ENCODE measurements at regions of chr6 and their contacts with region 1.

Region 1: GRCh38 chr6:85678602-85679444 is 36.1 kb upstream of the SYNCRIP start:
- DNase-seq: peak; percentile 98
- H3K4me3 Mint-ChIP-seq: peak overlapping the region; percentile 89
- H3K27ac Mint-ChIP-seq: peak overlapping the region; percentile 92
- H3K4me1 Mint-ChIP-seq: peaks cover 52% of the 10 kb centered on the region
- H3K27me3 Mint-ChIP-seq: no peaks in the 10 kb centered on the region

Region 2: GRCh38 chr6:85600713-85601313 is 78.0 kb before region 1 on chr6:
- CTCF ChIA-PET with region 1: interaction called, 3 read pairs
- POLR2A ChIA-PET with region 1: interaction called, 141 read pairs
- DNase-seq: no peak
- H3K4me3 Mint-ChIP-seq: no peak overlapping the region
- H3K27ac Mint-ChIP-seq: no peak overlapping the region
- H3K4me1 Mint-ChIP-seq: no peaks in the 10 kb centered on the region
- H3K27me3 Mint-ChIP-seq: no peaks in the 10 kb centered on the region

Region 3: DNA sequence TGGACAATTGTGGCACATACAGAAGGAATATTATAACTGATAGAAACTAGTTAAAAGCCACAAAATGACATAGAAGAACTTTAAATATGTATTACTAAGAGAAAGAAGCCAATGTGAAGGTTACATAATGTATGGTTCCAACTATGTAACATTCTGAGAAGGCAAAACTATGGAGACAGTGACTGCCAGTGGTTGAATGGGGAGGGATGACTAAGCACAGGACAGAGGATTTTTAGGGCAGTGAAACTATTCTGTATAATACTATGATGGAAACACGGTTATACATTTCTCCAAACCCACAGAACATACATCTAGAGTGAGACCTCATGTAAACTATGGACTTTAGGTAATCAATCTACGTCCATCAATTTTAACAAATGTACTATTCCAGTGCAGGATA is 58.5 kb before region 1 on chr6:
- CTCF ChIA-PET with region 1: no interaction called
- POLR2A ChIA-PET with region 1: interaction called, 29 read pairs
- DNase-seq: no peak
- H3K4me3 Mint-ChIP-seq: no peak overlapping the region
- H3K27ac Mint-ChIP-seq: no peak overlapping the region
- H3K4me1 Mint-ChIP-seq: peaks cover 23% of the 10 kb centered on the region
- H3K27me3 Mint-ChIP-seq: no peaks in the 10 kb centered on the region

Region 4: DNA sequence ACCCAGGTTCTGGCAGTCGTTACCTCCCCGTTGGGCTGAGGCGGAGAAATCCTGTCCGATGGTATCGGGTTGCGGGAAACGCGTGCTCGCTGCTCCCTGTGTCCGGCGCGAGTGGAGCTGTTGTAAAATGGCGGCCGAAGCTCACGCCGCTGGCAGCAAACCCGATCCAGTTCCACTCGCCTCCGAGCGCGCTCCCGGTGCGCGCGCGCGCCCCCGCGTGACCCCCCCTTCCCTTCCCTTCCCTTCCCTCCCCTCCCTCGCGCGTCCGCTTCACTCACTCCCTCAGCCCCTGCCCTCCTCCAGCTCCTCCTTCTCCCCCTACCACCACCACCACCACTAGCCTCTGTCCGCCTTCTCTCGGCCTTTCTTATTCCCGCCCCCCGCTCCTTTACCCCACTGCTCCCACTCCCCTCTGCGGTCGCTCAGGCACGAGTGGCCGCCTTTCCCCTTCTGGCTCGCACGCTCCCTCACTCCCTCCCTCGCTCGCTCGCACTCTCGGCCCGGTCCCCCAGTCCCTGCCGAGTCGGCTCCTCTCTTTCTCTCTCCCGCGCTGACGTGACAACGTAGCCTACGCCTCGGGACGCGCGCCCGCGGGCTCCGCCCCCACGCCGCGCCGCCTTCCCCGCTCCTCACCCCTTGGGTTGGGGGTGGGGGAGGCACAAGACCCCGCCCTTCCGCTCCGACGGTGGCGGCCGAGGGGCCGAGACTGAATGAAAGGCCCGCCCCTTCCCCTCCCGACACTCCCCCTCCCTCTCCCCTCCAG is 35.9 kb before region 1 on chr6 and contains the start of gene SYNCRIP:
- CTCF ChIA-PET with region 1: interaction called, 116 read pairs
- POLR2A ChIA-PET with region 1: interaction called, 1,187 read pairs
- DNase-seq: peak; percentile 99
- H3K4me3 Mint-ChIP-seq: peak within 1 kb of the TSS; percentile 92
- H3K27ac Mint-ChIP-seq: peak within 1 kb of the TSS; percentile 99
- H3K4me1 Mint-ChIP-seq: peaks cover 48% of the 10 kb centered on the region
- H3K27me3 Mint-ChIP-seq: peaks cover 1% of the 10 kb centered on the region
- total RNA-seq, gene SYNCRIP: 100.0 to 101 TPM

Region 5: DNA sequence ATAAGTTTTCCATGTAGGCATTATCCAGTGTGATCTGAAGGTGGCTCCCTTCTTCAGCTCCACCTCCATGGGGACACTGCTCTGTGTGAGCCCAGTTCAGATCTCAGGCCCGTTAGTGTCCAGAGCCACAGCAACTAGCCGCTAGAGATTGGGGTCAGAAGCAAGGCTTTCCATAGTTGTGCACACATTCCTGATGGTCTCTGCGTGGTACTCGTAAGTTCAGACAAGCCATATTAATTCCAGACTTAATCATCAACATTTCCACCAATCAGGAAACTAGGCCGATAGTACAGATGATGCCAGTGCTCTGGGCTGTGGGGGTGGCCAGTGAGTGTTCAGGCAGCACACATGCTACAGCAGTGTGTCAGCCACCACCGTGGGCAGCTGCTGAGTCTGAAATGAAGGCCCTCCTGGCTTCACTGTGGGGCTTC is 18.6 kb before region 1 on chr6:
- CTCF ChIA-PET with region 1: no interaction called
- POLR2A ChIA-PET with region 1: interaction called, 12 read pairs
- DNase-seq: no peak
- H3K4me3 Mint-ChIP-seq: no peak overlapping the region
- H3K27ac Mint-ChIP-seq: no peak overlapping the region
- H3K4me1 Mint-ChIP-seq: no peaks in the 10 kb centered on the region
- H3K27me3 Mint-ChIP-seq: peaks cover 8% of the 10 kb centered on the region

Measured in activated CD4-positive, alpha-beta memory T cell treated with anti-CD3 and anti-CD28 coated beads, Interleukin-2, amount 10 ng/mL, durations not matched to agents 7 days and 5 days (primary cell).